Heart right ventricle (tissue), 16 donors: ENCODE measurements at regions of chr1 and their contacts with region 1.

Region 1: DNA sequence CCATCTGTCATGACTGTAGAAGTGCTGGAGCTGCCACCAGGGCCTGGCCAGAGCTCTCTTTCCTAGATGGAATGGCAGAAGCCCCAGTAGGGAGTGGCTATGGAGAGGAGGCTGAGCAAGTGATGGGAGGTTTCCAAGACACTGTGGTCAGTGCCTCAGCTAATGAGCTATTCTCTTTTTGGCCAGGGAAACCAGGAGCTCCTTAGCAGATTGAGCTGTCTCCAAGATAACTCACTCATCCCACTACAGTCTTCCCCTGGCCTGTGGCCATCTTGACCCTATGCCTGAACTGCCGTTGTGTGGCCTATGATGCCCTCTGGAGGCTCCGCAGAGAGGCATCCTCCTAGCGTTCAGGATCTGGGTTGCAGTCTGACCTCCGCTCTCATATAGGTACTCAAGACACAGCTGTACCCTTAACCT is 60.5 kb downstream of the ERI3 start:
- DNase-seq: peak in 1 of 2 donors; percentile 9
- ATAC-seq: peak in 4 of 8 donors; percentile 15 to 67 (median 20)
- H3K4me3 ChIP-seq: no peak overlapping the region
- H3K27ac ChIP-seq: peak overlapping the region in 3 of 10 donors; percentile 34 to 76 (median 45)
- H3K4me1 ChIP-seq: peaks cover 0 to 18% (median 13%) of the 10 kb centered on the region in 9 donors
- H3K27me3 ChIP-seq: no peaks in the 10 kb centered on the region
- CTCF ChIP-seq: peak in 4 of 9 donors; percentile 18 to 41 (median 32)

Region 2: GRCh38 chr1:43796111-43796581 is 498.5 kb before region 1 on chr1:
- intact Hi-C with region 1: no loop called
- DNase-seq: no peak
- ATAC-seq: no peak
- H3K4me3 ChIP-seq: no peak overlapping the region
- H3K27ac ChIP-seq: no peak overlapping the region
- H3K4me1 ChIP-seq: peaks cover 0 to 31% (median 10%) of the 10 kb centered on the region in 9 donors
- H3K27me3 ChIP-seq: no peaks in the 10 kb centered on the region
- CTCF ChIP-seq: no peak

Region 3: GRCh38 chr1:44220001-44220733 is 74.4 kb before region 1 on chr1:
- intact Hi-C with region 1: loop called in 3 of 10 experiments (anchors 5 to 10 kb)
- DNase-seq: no peak
- ATAC-seq: no peak
- H3K4me3 ChIP-seq: no peak overlapping the region
- H3K27ac ChIP-seq: no peak overlapping the region
- H3K4me1 ChIP-seq: peaks cover 0 to 10% (median 0%) of the 10 kb centered on the region in 9 donors
- H3K27me3 ChIP-seq: no peaks in the 10 kb centered on the region
- CTCF ChIP-seq: no peak

Region 4: DNA sequence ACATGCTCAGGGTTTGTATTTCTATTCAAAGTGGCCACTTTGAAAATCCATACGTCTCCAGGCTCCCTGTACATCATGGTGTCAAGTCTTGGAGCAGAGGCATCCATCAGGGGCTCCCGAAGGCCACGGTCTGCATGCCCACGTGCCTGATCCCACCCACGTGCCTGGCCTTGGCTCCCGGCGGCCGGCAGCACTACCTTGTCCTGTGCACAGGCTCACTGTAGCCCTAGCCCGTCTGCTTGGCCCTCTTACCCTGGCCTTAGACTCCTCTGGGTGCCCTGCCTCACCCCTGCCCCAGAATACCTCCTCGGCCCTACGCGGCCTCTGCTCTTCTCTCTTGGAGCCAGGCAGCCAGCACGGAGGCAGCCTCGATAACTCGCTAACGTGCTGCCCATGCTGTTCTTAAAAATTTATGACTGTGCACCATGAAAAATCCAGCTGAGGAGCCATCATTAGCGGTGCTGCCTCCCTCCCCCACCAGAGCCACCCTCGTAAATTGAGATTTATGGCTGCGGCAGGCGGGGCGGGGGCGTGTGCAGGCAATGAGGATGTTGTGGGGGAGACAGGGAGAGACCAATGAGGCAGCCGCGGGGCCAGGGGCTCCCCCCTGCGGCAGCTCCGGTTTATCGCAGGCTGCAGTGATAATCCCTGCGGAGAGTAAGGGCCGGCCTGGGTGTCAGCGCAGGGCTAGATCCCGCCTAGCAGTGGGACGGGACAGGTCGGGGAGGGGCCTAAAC is 56.7 kb before region 1 on chr1:
- intact Hi-C with region 1: loop called in 1 of 10 experiments (anchors 5 kb)
- DNase-seq: no peak
- ATAC-seq: no peak
- H3K4me3 ChIP-seq: no peak overlapping the region
- H3K27ac ChIP-seq: no peak overlapping the region
- H3K4me1 ChIP-seq: peaks cover 12 to 28% (median 23%) of the 10 kb centered on the region in 9 donors
- H3K27me3 ChIP-seq: no peaks in the 10 kb centered on the region
- CTCF ChIP-seq: peak in 7 of 9 donors; percentile 19 to 47 (median 32)

Region 5: DNA sequence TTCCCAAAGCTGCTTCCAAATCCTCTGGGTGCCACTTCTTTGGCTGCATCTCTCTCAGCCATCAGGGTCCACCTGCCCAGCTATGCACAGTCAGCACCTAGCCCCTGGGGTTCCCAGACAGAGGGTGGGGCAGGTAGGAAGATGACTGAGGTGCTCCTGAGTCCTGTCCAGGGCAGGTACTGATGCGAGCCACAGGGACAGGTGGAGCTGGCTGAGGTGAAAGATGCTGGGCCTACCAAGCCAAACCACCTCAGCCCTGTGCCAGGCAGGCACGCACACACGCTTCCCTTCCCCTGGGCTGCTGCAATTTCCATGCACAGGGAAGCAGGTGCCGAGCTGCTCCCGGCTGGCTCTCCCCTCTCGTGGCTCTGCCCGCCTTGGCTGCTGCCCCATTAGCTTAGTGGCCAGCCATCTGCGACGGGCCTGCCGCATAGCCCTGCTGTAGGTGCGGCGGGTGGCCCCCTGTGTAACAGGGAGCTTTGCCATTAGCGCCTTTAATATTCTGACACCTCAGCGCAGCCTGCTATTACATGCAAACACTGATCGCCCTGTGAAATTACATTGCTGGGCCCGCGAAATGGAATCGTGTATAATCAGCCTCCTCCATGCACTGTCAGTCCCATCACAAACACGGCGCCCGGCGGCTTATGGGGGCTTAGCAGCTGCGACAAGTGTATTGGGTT is 42.5 kb before region 1 on chr1:
- intact Hi-C with region 1: loop called in 1 of 10 experiments (anchors 5 kb)
- DNase-seq: no peak
- ATAC-seq: no peak
- H3K4me3 ChIP-seq: no peak overlapping the region
- H3K27ac ChIP-seq: no peak overlapping the region
- H3K4me1 ChIP-seq: peaks cover 6 to 27% (median 11%) of the 10 kb centered on the region in 9 donors
- H3K27me3 ChIP-seq: no peaks in the 10 kb centered on the region
- CTCF ChIP-seq: no peak

Region 6: DNA sequence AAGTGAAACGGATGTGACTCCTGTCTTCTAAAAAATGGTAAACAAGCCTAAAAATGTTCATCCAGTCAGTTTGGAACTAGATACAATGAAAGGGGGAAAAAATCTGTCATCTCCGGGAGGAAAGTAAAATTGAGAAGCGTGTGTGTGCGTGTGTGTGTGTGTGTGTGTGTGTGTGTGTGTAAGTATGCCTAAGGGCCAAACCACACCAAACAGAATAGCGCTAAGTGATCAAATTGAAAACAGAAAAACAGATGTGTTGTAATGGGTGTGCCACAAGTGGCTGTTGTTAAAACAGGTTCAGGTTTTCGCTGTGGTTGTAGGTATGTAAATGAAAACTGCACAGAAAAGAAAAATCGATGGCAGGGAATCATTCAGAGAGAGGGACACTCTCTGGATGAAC is 217.2 kb after region 1 on chr1:
- intact Hi-C with region 1: no loop called
- DNase-seq: no peak
- ATAC-seq: no peak
- H3K4me3 ChIP-seq: no peak overlapping the region
- H3K27ac ChIP-seq: no peak overlapping the region
- H3K4me1 ChIP-seq: no peaks in the 10 kb centered on the region
- H3K27me3 ChIP-seq: peaks cover 0 to 47% (median 17%) of the 10 kb centered on the region in 7 donors
- CTCF ChIP-seq: no peak